ENCODE measurements at regions of chr6 and their contacts with region 1.

Region 1: GRCh38 chr6:112163295-112164257 is 76.2 kb downstream of the FAM229B start:
- DNase-seq: peak; percentile 38
- ATAC-seq: peak; percentile 99
- H3K4me3 ChIP-seq: no peak overlapping the region
- H3K27ac ChIP-seq: no peak overlapping the region
- H3K4me1 ChIP-seq: no peaks in the 10 kb centered on the region
- H3K27me3 ChIP-seq: peaks cover 4% of the 10 kb centered on the region; the same call in 1 of the 2 replicates
- CTCF ChIP-seq: peak; percentile 100

Region 2: GRCh38 chr6:111522393-111523020 is 641.1 kb before region 1 on chr6:
- CTCF ChIA-PET with region 1: no interaction called
- POLR2A ChIA-PET with region 1: no interaction called
- in situ Hi-C with region 1: no loop called
- intact Hi-C with region 1: no loop called
- DNase-seq: no peak
- ATAC-seq: peak; percentile 29; the same call in 1 of the 2 replicates
- H3K4me3 ChIP-seq: no peak overlapping the region
- H3K27ac ChIP-seq: peak overlapping the region; percentile 7; the same call in 1 of the 2 replicates
- H3K4me1 ChIP-seq: peaks cover 13% of the 10 kb centered on the region; the same call in 1 of the 2 replicates
- H3K27me3 ChIP-seq: no peaks in the 10 kb centered on the region
- CTCF ChIP-seq: no peak

Region 3: DNA sequence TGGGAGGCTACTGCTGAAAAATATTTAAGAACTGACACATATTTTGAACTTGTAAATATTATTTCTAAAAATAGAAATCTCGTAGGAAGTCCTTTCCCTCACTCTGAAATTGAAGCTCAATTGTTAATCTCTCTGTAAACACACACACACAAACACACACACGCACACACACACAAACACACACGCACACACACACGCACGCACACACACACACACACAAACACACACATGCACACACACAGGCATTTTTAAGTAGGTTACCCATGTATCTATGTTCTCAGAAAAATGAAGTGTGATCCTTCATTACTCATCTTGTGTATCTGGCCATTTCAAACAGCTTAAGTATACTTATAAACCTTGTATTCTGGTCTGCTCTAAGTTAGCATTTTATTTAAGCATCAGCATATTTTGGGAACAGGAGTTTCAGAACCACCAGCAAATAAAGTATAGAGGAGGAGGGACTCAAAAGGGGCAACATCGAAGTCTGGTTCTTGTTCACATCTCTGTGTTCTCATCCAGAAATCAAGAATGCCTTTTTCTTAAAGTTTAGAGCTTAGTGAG is 98.1 kb before region 1 on chr6:
- CTCF ChIA-PET with region 1: no interaction called
- POLR2A ChIA-PET with region 1: no interaction called
- in situ Hi-C with region 1: no loop called
- intact Hi-C with region 1: no loop called
- DNase-seq: no peak
- ATAC-seq: no peak
- H3K4me3 ChIP-seq: no peak overlapping the region
- H3K27ac ChIP-seq: no peak overlapping the region
- H3K4me1 ChIP-seq: no peaks in the 10 kb centered on the region
- H3K27me3 ChIP-seq: no peaks in the 10 kb centered on the region
- CTCF ChIP-seq: no peak

Region 4: DNA sequence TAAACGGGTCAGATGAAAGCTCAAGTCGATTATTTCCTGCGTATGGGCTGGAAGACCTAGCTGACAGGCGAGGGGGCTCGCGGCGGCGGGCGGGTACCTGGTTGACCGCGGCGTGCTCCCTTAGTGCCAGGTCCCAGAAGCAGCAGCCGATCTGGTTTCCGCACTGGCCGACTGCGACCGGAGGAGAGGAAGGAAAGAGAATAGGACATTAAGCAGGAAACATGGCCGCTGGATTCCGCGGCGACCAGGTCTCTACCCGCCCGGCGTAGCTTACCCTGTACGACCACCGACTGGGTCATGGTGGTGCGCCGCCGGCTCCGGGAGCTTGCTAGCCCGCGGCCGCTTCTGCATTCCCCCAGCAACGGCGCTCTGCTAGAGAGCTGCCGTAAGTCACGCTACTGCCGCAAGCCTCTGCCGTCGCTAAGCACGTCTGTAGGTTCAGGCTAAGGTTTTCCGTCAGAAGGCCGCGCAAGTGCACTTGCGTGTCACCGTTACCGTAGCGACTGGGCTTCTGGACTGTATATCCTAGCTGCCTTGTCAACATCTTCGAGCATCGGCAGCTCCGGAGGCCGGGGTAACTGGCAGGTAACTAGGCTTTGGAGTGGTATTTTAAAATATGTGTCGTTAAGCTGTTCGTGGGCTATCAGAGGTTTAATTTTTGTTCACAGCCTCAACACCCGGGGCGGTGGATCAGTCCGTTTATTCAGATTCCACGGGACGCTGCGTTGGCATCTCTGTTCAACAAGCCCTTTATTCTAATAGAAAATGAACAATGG is 76.3 kb before region 1 on chr6 and contains the starts of genes FAM229B and TUBE1:
- CTCF ChIA-PET with region 1: interaction called, 5 read pairs
- POLR2A ChIA-PET with region 1: no interaction called
- in situ Hi-C with region 1: no loop called
- intact Hi-C with region 1: loop called (anchors 5 kb)
- DNase-seq: peak; percentile 95
- ATAC-seq: peak; percentile 97
- H3K4me3 ChIP-seq: peak within 1 kb of the TSS; percentile 92 to 94
- H3K27ac ChIP-seq: peak within 1 kb of the TSS; percentile 94
- H3K4me1 ChIP-seq: peaks cover 10% of the 10 kb centered on the region; the same call in 1 of the 2 replicates
- H3K27me3 ChIP-seq: peaks cover 7% of the 10 kb centered on the region; the same call in 1 of the 2 replicates
- CTCF ChIP-seq: no peak
- total RNA-seq, gene FAM229B: 12.0 TPM
- total RNA-seq, gene TUBE1: 22.3 TPM

Region 5: DNA sequence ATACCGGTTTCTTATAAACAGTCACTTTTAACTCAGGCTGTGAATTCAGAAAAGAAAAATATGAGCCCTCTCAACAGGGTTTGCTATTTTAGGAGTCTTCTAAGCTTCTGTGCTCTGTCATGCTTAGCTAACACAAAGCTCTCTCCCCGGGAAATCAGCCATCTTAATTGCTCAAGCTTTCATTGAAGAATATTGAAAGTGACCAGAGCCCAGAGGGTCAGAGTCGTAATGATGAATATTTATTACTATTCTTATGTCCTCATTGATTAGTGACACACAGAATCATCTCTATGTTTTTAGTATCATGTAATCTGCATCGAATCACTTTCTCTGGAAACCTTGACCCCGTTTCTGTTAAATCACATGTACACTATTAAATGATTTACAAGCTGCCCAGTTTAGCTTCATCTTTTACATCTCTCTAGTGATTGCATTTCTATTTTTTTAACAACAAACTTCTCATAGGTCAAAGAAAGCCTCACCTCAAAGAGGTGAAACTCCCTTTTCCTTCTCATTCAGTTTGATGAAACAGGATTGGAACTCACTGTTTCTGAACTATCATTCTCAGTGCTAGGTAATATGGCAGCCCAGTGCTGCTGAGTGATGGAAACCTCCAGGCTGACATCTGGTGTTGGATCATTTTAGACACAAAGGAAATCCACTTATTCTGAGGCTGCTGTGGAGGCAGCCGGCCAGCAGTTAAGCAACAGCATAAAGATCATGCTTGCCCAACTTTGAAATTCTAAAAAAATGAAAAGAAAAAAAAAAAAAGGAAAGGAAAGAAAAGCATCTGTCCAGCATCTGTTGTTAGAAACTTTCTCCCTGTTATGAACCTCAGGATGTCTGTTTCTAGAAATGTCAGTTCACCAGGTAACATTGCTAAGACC is 279.8 kb after region 1 on chr6:
- CTCF ChIA-PET with region 1: no interaction called
- POLR2A ChIA-PET with region 1: no interaction called
- in situ Hi-C with region 1: no loop called
- intact Hi-C with region 1: no loop called
- DNase-seq: no peak
- ATAC-seq: no peak
- H3K4me3 ChIP-seq: no peak overlapping the region
- H3K27ac ChIP-seq: no peak overlapping the region
- H3K4me1 ChIP-seq: no peaks in the 10 kb centered on the region
- H3K27me3 ChIP-seq: no peaks in the 10 kb centered on the region
- CTCF ChIP-seq: peak; percentile 20; the same call in 1 of the 2 replicates